ENCODE measurements at regions of chr10 and their contacts with region 1.

Region 1: DNA sequence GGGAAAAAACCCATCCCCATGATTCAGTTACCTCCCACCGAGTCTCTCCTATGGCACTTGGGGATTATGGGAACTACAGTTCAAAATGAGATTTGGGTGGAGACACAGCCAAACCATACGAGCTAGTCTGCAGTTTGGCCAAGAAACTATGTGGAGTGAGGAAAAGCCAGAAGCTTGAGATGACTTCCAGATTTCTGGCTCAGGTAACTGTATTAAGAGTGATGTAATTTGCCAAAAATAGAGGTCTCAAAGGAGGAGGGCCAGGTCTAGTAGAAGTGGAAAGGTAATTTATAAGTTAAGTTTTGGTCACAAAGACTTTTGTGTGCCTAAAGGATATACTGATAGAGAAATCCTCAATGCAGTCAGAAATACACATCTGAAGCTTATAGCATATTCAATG is 279.7 kb upstream of the MGMT start:
- DNase-seq: no peak
- ATAC-seq: no peak
- H3K4me3 ChIP-seq: no peak overlapping the region
- H3K27ac ChIP-seq: no peak overlapping the region
- H3K4me1 ChIP-seq: no peaks in the 10 kb centered on the region
- H3K27me3 ChIP-seq: no peaks in the 10 kb centered on the region
- CTCF ChIP-seq: no peak
- POLR2A ChIP-seq: no peak
- RAD21 ChIP-seq: no peak

Region 2: GRCh38 chr10:129131457-129132132 is 55.7 kb before region 1 on chr10:
- CTCF ChIA-PET with region 1: no interaction called
- POLR2A ChIA-PET with region 1: no interaction called
- RAD21 ChIA-PET with region 1: no interaction called
- intact Hi-C with region 1: loop called (anchors 2 kb)
- DNase-seq: no peak
- ATAC-seq: no peak
- H3K4me3 ChIP-seq: no peak overlapping the region
- H3K27ac ChIP-seq: no peak overlapping the region
- H3K4me1 ChIP-seq: no peaks in the 10 kb centered on the region
- H3K27me3 ChIP-seq: no peaks in the 10 kb centered on the region
- CTCF ChIP-seq: no peak
- POLR2A ChIP-seq: no peak
- RAD21 ChIP-seq: no peak

Region 3: DNA sequence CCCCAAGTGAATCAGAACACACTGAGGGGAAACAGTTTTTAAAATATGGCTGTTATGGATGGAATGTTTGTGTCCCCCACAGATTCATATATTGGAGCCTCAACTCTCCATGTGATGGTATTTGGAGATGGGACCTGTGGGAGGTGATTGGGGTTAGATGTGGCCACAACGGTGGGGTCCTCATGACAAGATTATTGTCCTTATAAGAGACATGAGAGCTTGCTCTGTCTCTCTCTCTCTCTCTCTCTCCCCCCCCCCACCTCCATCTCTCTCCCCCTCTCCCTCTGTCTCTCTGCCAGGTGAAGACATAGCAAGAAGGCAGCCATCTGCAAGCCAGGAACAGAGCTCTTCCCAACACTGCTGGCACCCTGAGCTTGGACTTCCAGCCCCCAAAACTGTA is 36.0 kb before region 1 on chr10:
- CTCF ChIA-PET with region 1: no interaction called
- POLR2A ChIA-PET with region 1: no interaction called
- RAD21 ChIA-PET with region 1: no interaction called
- intact Hi-C with region 1: no loop called
- DNase-seq: no peak
- ATAC-seq: no peak
- H3K4me3 ChIP-seq: no peak overlapping the region
- H3K27ac ChIP-seq: no peak overlapping the region
- H3K4me1 ChIP-seq: no peaks in the 10 kb centered on the region
- H3K27me3 ChIP-seq: no peaks in the 10 kb centered on the region
- CTCF ChIP-seq: no peak
- POLR2A ChIP-seq: no peak
- RAD21 ChIP-seq: no peak